ENCODE measurements at regions of chr3 and their contacts with region 1.

Region 1: GRCh38 chr3:172501560-172501959 is 21.7 kb downstream of the TNFSF10 start:
- DNase-seq: no peak
- H3K4me3 ChIP-seq: no peak overlapping the region
- H3K27ac ChIP-seq: no peak overlapping the region
- H3K4me1 ChIP-seq: no peaks in the 10 kb centered on the region
- H3K27me3 ChIP-seq: no peaks in the 10 kb centered on the region
- CTCF ChIP-seq: no peak

Region 2: DNA sequence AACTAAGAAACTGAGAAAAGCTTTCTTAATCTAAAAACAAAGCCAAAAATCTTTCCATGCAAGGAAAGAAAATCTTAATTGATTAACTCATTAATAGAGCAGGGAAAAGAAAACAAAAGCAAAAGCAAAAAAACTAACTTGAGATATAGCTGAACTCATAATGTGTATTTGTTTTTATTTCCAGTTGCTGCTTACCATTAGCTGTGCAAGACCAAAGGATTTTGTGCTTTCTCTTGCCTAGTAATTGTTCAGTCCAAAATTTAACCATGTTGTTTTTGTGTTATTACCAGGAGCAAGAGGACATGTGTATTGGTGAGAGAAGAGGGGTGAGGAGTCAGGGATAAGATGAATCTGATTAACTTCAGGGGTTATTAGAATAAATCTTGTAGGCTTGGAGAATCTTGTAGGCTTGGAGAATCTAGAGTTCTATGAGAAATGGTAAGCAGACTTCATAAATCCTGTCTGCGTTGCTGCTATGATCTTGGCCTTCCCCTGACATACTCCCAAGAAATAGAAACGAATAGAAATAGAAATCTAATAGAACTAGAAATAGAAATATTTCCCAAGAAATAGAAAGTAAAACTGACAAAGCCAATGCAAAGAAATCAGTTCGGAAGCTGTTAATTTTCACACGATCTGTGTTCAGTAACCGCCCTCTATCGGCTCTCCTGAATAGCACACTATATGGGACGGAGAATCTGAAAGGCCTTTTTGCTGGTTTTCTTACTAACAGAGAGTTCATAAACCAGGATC is 94.3 kb after region 1 on chr3:
- CTCF ChIA-PET with region 1: no interaction called
- dilution Hi-C with region 1: no loop called
- in situ Hi-C with region 1: loop called in 1 of 2 experiments (anchors 5 kb)
- intact Hi-C with region 1: no loop called
- DNase-seq: peak; percentile 65
- H3K4me3 ChIP-seq: peak overlapping the region; percentile 11 to 23 (median 11)
- H3K27ac ChIP-seq: peak overlapping the region; percentile 28
- H3K4me1 ChIP-seq: peaks cover 8% of the 10 kb centered on the region
- H3K27me3 ChIP-seq: no peaks in the 10 kb centered on the region
- CTCF ChIP-seq: peak; percentile 86 to 90

Region 3: GRCh38 chr3:173529067-173529711 is 1027.6 kb after region 1 on chr3:
- CTCF ChIA-PET with region 1: interaction called, 15 read pairs
- dilution Hi-C with region 1: no loop called
- in situ Hi-C with region 1: no loop called
- intact Hi-C with region 1: no loop called
- DNase-seq: peak; percentile 38
- H3K4me3 ChIP-seq: no peak overlapping the region
- H3K27ac ChIP-seq: no peak overlapping the region
- H3K4me1 ChIP-seq: no peaks in the 10 kb centered on the region
- H3K27me3 ChIP-seq: no peaks in the 10 kb centered on the region
- CTCF ChIP-seq: peak; percentile 61 to 70